PC-9 (cell line): ENCODE measurements at regions of chr2 and their contacts with region 1.

Region 1: DNA sequence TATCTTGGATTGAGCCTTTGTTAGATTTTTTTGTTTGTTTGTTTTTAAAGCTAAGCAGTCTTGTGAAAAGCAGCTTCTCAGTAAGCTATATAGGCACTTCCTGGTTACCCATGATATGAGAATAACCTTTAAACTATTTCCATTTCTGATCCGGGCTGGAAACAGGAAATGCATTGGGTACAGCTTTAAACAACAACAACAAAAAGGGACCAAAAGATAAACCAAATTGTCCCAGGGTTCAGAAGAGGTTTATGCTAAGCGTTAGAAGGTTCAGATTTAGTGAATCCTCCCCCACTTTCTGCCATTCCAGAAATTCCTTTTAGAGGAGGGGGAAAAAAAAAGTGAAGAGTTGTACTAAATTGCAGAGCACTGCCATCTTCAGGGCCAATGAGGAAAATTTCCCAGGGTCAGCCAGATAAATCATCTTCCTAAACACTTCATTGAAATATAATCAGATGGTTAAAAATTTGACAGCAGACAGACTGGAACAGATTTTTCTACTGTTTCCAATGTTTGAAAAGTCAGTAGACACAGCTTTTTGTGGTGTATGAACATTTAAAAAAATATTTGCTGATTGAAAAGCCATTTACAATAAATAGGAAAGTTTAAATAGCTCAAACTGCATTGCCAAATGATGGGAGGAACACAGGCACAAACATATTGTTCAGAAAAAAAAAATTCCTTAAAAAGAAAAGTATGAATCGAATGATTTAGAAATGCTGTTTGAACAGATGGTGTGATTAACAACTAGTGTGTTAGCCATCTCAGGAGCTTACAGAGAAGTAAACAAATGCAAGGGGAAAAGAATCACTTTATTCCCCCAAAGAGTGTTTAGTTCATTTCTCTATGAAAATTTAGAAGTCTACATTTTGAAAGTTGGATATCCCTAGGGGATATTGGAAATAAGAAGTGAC is 189.9 kb upstream of the TANK start:
- DNase-seq: peak; percentile 37 to 92
- H3K4me3 ChIP-seq: peak overlapping the region; percentile 21; the same call in 1 of the 2 replicates
- H3K27ac ChIP-seq: peak overlapping the region; percentile 80
- H3K4me1 ChIP-seq: 0 out of 2 replicates have a peak, but pooled peaks cover 4% of the 10 kb centered on the region
- H3K27me3 ChIP-seq: no peaks in the 10 kb centered on the region
- CTCF ChIP-seq: peak; percentile 76

Region 2: GRCh38 chr2:160109936-160110673 is 860.2 kb before region 1 on chr2:
- CTCF ChIA-PET with region 1: no interaction called
- POLR2A ChIA-PET with region 1: no interaction called
- intact Hi-C with region 1: loop called (anchors 1 kb)
- DNase-seq: peak in 1 of 2 experiments; percentile 46
- H3K4me3 ChIP-seq: no peak overlapping the region
- H3K27ac ChIP-seq: no peak overlapping the region
- H3K4me1 ChIP-seq: no peaks in the 10 kb centered on the region
- H3K27me3 ChIP-seq: no peaks in the 10 kb centered on the region
- CTCF ChIP-seq: peak; percentile 77

Region 3: DNA sequence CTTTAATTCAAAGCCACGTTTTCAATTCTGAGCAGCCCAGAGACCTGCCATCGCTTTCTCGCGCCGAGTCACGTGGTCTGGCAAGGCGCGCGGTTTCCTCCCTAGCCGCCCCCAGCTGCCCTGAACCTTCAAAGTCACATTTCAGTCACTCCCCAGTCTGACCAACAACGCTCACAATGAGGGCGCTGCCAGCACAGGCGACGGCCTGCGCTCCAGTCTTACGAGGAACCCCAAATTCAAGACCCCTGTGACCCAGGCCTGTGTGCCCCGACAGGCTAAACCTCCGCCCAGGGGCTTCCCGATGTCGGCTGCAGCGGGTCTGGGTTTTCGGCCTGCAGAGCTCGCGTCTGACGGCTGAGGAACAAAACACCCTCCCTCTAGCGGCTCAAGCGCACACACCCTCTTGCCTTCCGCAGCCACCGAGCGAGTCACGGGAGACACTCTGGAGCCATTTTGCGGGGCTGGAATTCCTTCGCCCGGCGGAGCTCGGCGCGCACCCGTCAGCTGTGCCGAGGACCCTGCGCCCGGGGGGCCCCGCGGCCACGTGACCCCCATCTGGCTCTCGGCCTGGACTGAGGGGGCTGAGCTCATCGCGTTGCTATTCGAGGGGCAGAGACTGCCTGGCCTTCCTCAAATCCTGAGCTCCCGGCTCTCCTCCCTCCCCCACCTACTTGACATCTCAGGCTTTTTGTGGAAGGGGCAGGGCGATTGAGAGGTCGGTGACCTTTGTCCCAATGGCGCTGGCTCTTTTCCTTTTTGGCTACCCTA is 700.3 kb before region 1 on chr2:
- CTCF ChIA-PET with region 1: interaction called, 4 read pairs
- POLR2A ChIA-PET with region 1: no interaction called
- intact Hi-C with region 1: loop called (anchors 10 kb)
- DNase-seq: peak; percentile 78
- H3K4me3 ChIP-seq: peak overlapping the region; percentile 52; the same call in 1 of the 2 replicates
- H3K27ac ChIP-seq: peak overlapping the region; percentile 86
- H3K4me1 ChIP-seq: peaks cover 26% of the 10 kb centered on the region
- H3K27me3 ChIP-seq: no peaks in the 10 kb centered on the region
- CTCF ChIP-seq: peak; percentile 59

Region 4: DNA sequence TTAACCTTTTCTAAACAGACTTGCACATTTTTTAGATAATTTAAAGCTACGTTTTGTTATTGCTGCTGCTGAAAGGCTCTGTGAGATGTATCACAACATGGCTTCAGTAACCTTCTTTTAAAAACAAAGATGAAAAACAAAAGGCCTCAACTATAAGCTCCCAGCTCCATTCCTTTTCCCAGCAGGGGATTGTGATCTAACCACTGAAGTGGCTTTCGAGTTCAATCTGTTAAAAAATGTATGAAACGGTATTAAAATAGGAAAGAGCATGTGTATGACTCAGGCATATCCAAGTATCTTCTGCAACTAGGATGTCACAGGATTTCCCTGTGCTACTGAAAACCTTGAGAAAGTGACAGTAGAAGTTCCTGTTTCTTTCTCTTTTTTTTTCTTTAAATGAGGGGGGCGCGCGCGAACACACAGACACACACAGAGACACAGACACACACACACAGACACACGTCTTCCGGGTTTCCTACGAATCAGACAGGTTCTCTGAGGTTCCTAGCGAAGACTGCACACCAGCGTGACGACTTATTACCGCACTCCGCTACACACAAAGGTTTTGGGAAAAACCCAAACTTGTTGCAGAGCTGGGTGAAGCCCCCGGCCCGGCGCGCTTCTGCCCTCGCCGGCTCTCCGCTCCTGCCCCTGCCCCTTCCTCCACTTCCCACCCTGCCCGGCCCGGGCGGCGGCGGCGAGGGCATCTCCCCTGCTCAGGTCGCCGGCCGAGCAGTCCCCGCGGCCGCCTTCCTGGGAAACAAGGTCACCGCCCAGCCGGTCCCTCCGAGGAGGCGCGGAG is 563.5 kb before region 1 on chr2:
- CTCF ChIA-PET with region 1: no interaction called
- POLR2A ChIA-PET with region 1: no interaction called
- intact Hi-C with region 1: loop called (anchors 2 kb)
- DNase-seq: peak; percentile 31 to 56
- H3K4me3 ChIP-seq: peak overlapping the region; percentile 71
- H3K27ac ChIP-seq: peak overlapping the region; percentile 79
- H3K4me1 ChIP-seq: peaks cover 54% of the 10 kb centered on the region
- H3K27me3 ChIP-seq: no peaks in the 10 kb centered on the region
- CTCF ChIP-seq: no peak

Region 5: DNA sequence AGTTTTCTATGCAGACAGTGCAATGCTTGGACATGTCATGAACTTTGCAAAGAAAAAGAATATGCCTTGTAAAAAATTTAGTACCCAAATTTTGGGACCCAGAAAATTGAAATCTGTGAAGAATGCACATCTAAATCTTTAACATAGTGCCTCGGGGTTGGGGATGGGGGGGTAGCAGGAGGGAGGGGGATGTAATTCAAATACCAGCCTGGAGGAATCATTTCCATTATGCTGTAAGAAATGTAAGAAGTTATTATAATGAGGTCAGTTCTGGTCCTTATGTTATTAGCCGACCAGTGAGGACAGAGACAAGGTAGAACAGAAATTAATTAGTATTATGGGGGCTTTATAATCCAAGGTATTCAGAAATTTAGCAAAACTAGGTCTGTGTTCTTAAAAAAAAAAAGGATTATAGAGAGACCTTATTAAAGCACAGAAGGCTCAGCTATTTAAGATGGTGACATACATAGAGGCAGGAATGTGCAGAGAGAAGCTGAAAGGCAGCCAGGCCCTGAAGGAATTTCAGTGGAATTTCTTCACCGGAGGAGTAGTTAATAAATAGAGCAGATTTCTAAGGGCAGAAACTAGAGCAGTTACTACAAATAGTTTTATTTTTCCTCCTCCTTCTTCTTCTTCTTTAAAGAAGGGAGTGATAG is 387.7 kb before region 1 on chr2:
- CTCF ChIA-PET with region 1: no interaction called
- POLR2A ChIA-PET with region 1: no interaction called
- intact Hi-C with region 1: loop called (anchors 1 kb)
- DNase-seq: peak; percentile 29 to 64
- H3K4me3 ChIP-seq: no peak overlapping the region
- H3K27ac ChIP-seq: no peak overlapping the region
- H3K4me1 ChIP-seq: peaks cover 7% of the 10 kb centered on the region
- H3K27me3 ChIP-seq: no peaks in the 10 kb centered on the region
- CTCF ChIP-seq: no peak

Region 6: DNA sequence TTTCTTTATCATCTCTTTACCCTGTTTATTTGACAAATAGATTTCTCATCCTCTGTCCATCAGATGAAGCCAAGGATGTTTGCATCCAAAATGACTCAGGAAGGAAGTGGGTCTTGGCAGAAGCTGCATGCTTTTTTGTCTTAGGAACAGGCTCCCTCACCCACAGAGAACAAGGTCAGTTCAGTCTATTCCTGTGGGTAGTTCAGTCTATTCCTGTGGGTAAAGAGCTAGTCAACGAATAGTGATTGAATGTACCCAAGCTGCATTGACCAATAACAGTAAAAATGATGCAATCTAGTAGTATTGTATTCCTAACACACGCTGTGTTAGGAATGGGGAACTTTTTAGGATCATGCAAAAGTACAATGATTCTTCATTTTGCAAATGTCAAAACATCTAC is 100.9 kb before region 1 on chr2:
- CTCF ChIA-PET with region 1: no interaction called
- POLR2A ChIA-PET with region 1: no interaction called
- intact Hi-C with region 1: loop called (anchors 10 kb)
- DNase-seq: no peak
- H3K4me3 ChIP-seq: no peak overlapping the region
- H3K27ac ChIP-seq: no peak overlapping the region
- H3K4me1 ChIP-seq: no peaks in the 10 kb centered on the region
- H3K27me3 ChIP-seq: no peaks in the 10 kb centered on the region
- CTCF ChIP-seq: no peak